Activated naive CD4-positive, alpha-beta T cell treated with anti-CD3 and anti-CD28 coated beads for 36 hours (primary cell): ENCODE measurements at regions of chr7 and their contacts with region 1.

Region 1: DNA sequence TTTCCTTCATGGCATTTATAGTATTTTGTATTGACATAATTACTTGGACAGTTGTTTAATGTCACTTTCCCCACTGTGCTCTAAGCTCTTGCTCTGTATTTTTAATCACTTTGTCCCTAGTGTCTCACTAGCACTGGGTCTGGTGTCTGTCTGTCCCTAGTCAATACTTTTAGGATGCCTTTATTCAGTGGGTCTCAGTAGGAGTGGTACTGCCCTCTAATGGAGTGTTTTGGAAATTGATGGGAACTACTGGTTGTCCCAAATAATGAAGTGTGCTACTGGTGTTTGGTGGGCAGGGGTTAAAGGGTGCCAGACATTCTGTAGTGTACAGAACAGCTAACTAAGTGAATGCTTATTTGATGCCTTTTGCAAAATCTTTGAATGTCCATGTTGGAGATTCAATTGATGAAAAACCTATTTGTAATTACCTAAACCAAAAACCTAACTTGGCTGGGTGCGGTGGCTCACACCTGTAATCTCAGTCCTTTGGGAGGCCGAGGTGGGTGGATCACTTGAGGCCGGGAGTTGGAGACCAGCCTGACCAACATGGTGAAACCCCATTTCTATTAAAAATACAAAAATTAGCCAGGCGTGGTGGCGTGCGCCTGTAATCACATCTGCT is 33.3 kb downstream of the CDK14 start:
- DNase-seq: peak; percentile 12
- H3K4me3 Mint-ChIP-seq: no peak overlapping the region
- H3K27ac Mint-ChIP-seq: no peak overlapping the region
- H3K4me1 Mint-ChIP-seq: no peaks in the 10 kb centered on the region
- H3K27me3 Mint-ChIP-seq: peaks cover 4% of the 10 kb centered on the region

Region 2: GRCh38 chr7:90552521-90552920 is 76.9 kb before region 1 on chr7:
- CTCF ChIA-PET with region 1: interaction called, 3 read pairs
- intact Hi-C with region 1: loop called (anchors 1 kb)
- DNase-seq: no peak
- H3K4me3 Mint-ChIP-seq: no peak overlapping the region
- H3K27ac Mint-ChIP-seq: no peak overlapping the region
- H3K4me1 Mint-ChIP-seq: no peaks in the 10 kb centered on the region
- H3K27me3 Mint-ChIP-seq: peaks cover 26% of the 10 kb centered on the region

Region 3: DNA sequence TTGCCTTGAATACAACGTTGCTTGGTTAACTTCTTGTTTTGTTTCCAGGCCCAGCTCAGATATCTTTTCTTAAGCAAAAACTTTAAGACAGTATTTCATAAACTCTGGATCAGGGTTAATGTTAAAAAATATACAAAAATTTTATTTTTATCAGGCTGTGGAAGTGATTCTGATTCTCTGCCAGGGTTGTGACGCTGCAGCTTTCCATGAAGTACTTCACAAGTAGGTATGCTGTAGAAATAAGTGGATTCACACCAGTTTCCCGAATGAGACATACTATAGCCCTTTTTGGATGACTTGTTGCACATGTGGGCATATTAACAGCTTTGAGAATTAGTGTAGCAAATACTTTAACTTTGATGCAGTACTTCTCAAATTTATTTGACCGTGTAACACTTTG is 36.8 kb after region 1 on chr7:
- CTCF ChIA-PET with region 1: no interaction called
- intact Hi-C with region 1: no loop called
- DNase-seq: no peak
- H3K4me3 Mint-ChIP-seq: no peak overlapping the region
- H3K27ac Mint-ChIP-seq: no peak overlapping the region
- H3K4me1 Mint-ChIP-seq: no peaks in the 10 kb centered on the region
- H3K27me3 Mint-ChIP-seq: no peaks in the 10 kb centered on the region